Activated CD4-positive, alpha-beta memory T cell treated with anti-CD3 and anti-CD28 coated beads, Interleukin-2, amount 10 ng/mL, durations not matched to agents 7 days and 5 days (primary cell): ENCODE measurements at regions of chr4 and their contacts with region 1.

Region 1: GRCh38 chr4:78656968-78657445 is 105.4 kb downstream of the ANXA3 start:
- DNase-seq: peak; percentile 24
- H3K4me3 Mint-ChIP-seq: peak overlapping the region; percentile 53
- H3K27ac Mint-ChIP-seq: peak overlapping the region; percentile 78
- H3K4me1 Mint-ChIP-seq: peaks cover 42% of the 10 kb centered on the region
- H3K27me3 Mint-ChIP-seq: peaks cover 4% of the 10 kb centered on the region

Region 2: DNA sequence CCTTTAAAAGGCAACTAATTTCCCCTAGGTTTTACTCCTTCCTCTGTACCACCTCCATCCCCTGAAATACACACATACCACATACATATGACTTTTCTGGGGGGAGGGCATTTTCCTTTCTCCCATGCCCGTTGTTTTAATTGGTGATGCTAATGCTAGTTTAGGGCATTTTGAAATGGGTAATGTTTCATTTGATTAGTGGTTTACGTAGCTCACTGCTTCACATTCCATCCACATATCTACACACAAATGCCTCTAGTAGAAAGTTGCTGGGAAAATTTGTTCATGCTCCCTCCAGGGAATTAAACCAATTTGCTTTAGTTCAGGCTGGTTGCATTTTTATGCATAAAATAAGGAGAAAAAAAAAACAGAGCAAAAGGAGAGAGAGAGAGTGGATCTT is 368.7 kb before region 1 on chr4:
- CTCF ChIA-PET with region 1: no interaction called
- POLR2A ChIA-PET with region 1: no interaction called
- DNase-seq: no peak
- H3K4me3 Mint-ChIP-seq: no peak overlapping the region
- H3K27ac Mint-ChIP-seq: no peak overlapping the region
- H3K4me1 Mint-ChIP-seq: no peaks in the 10 kb centered on the region
- H3K27me3 Mint-ChIP-seq: peaks cover 2% of the 10 kb centered on the region

Region 3: GRCh38 chr4:78517050-78517652 is 139.9 kb before region 1 on chr4:
- CTCF ChIA-PET with region 1: no interaction called
- POLR2A ChIA-PET with region 1: no interaction called
- DNase-seq: no peak
- H3K4me3 Mint-ChIP-seq: no peak overlapping the region
- H3K27ac Mint-ChIP-seq: no peak overlapping the region
- H3K4me1 Mint-ChIP-seq: no peaks in the 10 kb centered on the region
- H3K27me3 Mint-ChIP-seq: peaks cover 5% of the 10 kb centered on the region

Region 4: DNA sequence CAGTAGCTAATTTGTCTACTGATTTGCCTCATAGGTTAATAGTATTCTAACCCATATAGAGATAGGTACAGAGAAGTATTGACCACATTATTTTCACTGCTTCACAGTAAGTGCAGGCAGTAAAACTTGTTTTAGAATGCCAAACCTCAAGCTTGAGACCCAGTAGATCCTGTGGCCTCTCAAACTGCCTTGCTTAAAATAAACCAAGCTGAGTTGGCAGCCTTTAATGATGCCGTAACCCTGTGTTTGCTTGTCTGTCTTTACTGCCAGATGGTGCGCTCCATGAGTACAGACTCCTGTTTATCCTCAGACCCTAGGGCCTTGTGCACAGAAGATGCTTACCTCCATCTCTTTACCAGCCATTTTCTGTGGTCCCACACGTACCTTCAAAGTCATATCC is 54.7 kb before region 1 on chr4:
- CTCF ChIA-PET with region 1: no interaction called
- POLR2A ChIA-PET with region 1: no interaction called
- DNase-seq: no peak
- H3K4me3 Mint-ChIP-seq: no peak overlapping the region
- H3K27ac Mint-ChIP-seq: no peak overlapping the region
- H3K4me1 Mint-ChIP-seq: no peaks in the 10 kb centered on the region
- H3K27me3 Mint-ChIP-seq: peaks cover 27% of the 10 kb centered on the region

Region 5: DNA sequence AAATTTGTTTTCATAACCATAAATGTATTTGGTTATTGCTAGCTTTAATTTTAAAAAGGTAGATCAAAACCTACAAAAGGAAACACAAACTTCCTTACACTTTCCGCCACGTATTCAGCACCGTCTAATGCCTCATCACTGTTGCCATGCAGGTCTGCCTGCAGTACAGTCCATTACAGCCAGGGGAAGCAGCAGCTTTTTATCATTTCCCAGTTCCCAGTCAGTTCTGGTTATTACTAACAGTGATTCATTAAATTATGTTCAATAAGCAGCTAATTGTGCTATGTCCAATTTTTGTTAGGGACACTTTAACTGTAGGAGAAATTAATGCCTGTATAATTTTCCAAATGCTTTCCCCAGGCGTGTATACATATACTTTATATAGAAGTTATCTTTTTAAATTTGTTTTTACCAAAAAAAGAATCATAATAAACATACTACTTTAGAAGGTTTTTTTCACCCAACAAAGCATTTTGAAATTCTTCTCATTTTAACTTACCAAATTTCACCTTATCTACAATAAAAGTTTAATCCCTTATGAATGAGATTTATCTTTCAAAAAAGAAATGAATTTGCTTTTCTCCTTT is 12.2 kb before region 1 on chr4:
- CTCF ChIA-PET with region 1: interaction called, 19 read pairs
- POLR2A ChIA-PET with region 1: interaction called, 3 read pairs
- DNase-seq: peak; percentile 57
- H3K4me3 Mint-ChIP-seq: no peak overlapping the region
- H3K27ac Mint-ChIP-seq: no peak overlapping the region
- H3K4me1 Mint-ChIP-seq: peaks cover 22% of the 10 kb centered on the region
- H3K27me3 Mint-ChIP-seq: peaks cover 4% of the 10 kb centered on the region

Region 6: GRCh38 chr4:78870056-78870455 is 213.0 kb after region 1 on chr4:
- CTCF ChIA-PET with region 1: no interaction called
- POLR2A ChIA-PET with region 1: no interaction called
- DNase-seq: no peak
- H3K4me3 Mint-ChIP-seq: no peak overlapping the region
- H3K27ac Mint-ChIP-seq: no peak overlapping the region
- H3K4me1 Mint-ChIP-seq: no peaks in the 10 kb centered on the region
- H3K27me3 Mint-ChIP-seq: no peaks in the 10 kb centered on the region